Caco-2 (cell line): ENCODE measurements at regions of chr20 and their contacts with region 1.

Region 1: GRCh38 chr20:20837574-20838021 is 125.2 kb upstream of the RALGAPA2 start:
- DNase-seq: peak; percentile 68 to 75
- H3K4me3 ChIP-seq: 0 out of 2 replicates have a peak overlapping the region, but pooled peaks have one; percentile 15
- H3K4me3 Mint-ChIP-seq: peak overlapping the region; percentile 5
- H3K27ac Mint-ChIP-seq: no peak overlapping the region
- H3K4me1 ChIP-seq: no peaks in the 10 kb centered on the region
- H3K4me1 Mint-ChIP-seq: peaks cover 6% of the 10 kb centered on the region
- H3K27me3 ChIP-seq: no peaks in the 10 kb centered on the region
- H3K27me3 Mint-ChIP-seq: peaks cover 7% of the 10 kb centered on the region
- CTCF ChIP-seq: peak; percentile 80 to 82

Region 2: DNA sequence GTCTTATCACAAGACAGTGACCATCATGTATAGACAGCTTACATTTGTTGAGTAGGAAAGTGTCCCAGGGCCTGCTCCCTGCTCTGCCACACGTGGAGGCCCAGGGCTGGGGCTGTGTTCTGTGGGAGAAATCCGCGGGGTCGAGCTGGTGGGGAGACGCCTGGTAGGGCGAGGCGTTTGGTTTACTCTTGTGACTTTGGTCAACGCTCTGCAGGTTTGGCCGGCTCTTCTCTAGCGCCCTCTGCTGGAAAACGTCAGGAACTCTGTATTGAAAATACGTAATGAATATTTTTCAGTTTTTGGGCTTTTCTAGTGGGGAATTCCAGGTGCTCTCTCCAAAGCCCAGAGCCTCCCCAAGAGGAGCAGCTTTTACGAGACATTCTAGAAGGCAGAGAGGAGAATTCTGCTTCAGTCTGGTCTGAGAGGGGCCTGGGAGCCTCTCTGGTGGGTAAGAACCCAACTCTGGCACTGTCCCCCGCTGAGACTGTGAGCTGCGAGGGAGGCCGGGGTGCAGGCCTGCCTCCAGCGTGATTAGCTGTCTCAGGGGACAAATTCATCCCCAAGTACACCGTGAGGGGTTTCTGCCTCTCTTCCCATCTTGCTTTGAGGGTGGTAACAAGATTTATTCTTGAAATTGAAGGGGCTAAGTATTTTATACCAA is 12.5 kb before region 1 on chr20:
- CTCF ChIA-PET with region 1: interaction called, 3 read pairs
- POLR2A ChIA-PET with region 1: interaction called, 10 read pairs
- intact Hi-C with region 1: no loop called
- DNase-seq: peak; percentile 63 to 67
- H3K4me3 ChIP-seq: no peak overlapping the region
- H3K4me3 Mint-ChIP-seq: no peak overlapping the region
- H3K27ac Mint-ChIP-seq: no peak overlapping the region
- H3K4me1 ChIP-seq: peaks cover 5% of the 10 kb centered on the region; the same call in 1 of the 2 replicates
- H3K4me1 Mint-ChIP-seq: no peaks in the 10 kb centered on the region
- H3K27me3 ChIP-seq: no peaks in the 10 kb centered on the region
- H3K27me3 Mint-ChIP-seq: peaks cover 13% of the 10 kb centered on the region
- CTCF ChIP-seq: peak; percentile 77 to 80

Region 3: GRCh38 chr20:21235484-21236445 is 398.2 kb after region 1 on chr20:
- CTCF ChIA-PET with region 1: interaction called, 7 read pairs
- POLR2A ChIA-PET with region 1: no interaction called
- intact Hi-C with region 1: loop called (anchors 1 kb)
- DNase-seq: peak; percentile 60 to 75
- H3K4me3 ChIP-seq: no peak overlapping the region
- H3K4me3 Mint-ChIP-seq: no peak overlapping the region
- H3K27ac Mint-ChIP-seq: no peak overlapping the region
- H3K4me1 ChIP-seq: no peaks in the 10 kb centered on the region
- H3K4me1 Mint-ChIP-seq: no peaks in the 10 kb centered on the region
- H3K27me3 ChIP-seq: no peaks in the 10 kb centered on the region
- H3K27me3 Mint-ChIP-seq: no peaks in the 10 kb centered on the region
- CTCF ChIP-seq: peak; percentile 70 to 87

Region 4: GRCh38 chr20:21505161-21505809 is 667.7 kb after region 1 on chr20:
- CTCF ChIA-PET with region 1: interaction called, 25 read pairs
- POLR2A ChIA-PET with region 1: no interaction called
- intact Hi-C with region 1: loop called (anchors 1 kb)
- DNase-seq: peak; percentile 74 to 89
- H3K4me3 ChIP-seq: peak overlapping the region; percentile 62
- H3K4me3 Mint-ChIP-seq: peak overlapping the region; percentile 47
- H3K27ac Mint-ChIP-seq: no peak overlapping the region
- H3K4me1 ChIP-seq: peaks cover 13% of the 10 kb centered on the region
- H3K4me1 Mint-ChIP-seq: no peaks in the 10 kb centered on the region
- H3K27me3 ChIP-seq: no peaks in the 10 kb centered on the region
- H3K27me3 Mint-ChIP-seq: peaks cover 3% of the 10 kb centered on the region
- CTCF ChIP-seq: peak; percentile 98 to 99

Region 5: GRCh38 chr20:21615617-21616080 is 778.1 kb after region 1 on chr20:
- CTCF ChIA-PET with region 1: interaction called, 10 read pairs
- POLR2A ChIA-PET with region 1: no interaction called
- intact Hi-C with region 1: loop called (anchors 5 kb)
- DNase-seq: peak; percentile 70 to 77
- H3K4me3 ChIP-seq: no peak overlapping the region
- H3K4me3 Mint-ChIP-seq: no peak overlapping the region
- H3K27ac Mint-ChIP-seq: no peak overlapping the region
- H3K4me1 ChIP-seq: peaks cover 4% of the 10 kb centered on the region; the same call in 1 of the 2 replicates
- H3K4me1 Mint-ChIP-seq: no peaks in the 10 kb centered on the region
- H3K27me3 ChIP-seq: no peaks in the 10 kb centered on the region; the same call in none of the 2 replicates
- H3K27me3 Mint-ChIP-seq: peaks cover 24% of the 10 kb centered on the region
- CTCF ChIP-seq: peak; percentile 87 to 93